ENCODE measurements at regions of chr6 and their contacts with region 1.

Region 1: DNA sequence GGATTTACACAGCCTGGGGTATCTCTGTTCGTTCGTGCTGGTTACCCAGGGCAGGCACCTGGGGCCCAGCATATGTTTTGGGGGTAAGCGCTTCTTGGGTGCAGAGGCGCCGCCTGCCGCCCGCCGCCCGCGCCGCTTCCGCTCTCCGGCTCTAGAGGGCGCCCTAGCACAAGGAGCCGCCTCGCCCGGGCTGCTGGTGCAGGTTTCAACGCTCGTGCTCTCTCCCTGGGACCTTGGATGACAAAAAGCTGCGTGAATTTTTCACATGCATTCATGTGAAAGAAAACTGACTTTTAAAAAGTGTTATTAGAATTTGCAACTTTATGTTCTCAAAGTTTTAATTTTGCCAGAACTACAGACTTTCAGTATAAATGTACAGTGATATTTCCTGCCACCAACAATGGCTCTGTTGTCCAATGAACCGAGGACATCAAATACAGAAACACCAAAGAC is 32.5 kb downstream of the PRR18 start:
- DNase-seq: peak; percentile 81
- ATAC-seq: peak; percentile 79

Region 2: GRCh38 chr6:166097915-166098522 is 177.7 kb before region 1 on chr6:
- intact Hi-C with region 1: no loop called
- DNase-seq: peak; percentile 82
- ATAC-seq: peak; percentile 96

Region 3: DNA sequence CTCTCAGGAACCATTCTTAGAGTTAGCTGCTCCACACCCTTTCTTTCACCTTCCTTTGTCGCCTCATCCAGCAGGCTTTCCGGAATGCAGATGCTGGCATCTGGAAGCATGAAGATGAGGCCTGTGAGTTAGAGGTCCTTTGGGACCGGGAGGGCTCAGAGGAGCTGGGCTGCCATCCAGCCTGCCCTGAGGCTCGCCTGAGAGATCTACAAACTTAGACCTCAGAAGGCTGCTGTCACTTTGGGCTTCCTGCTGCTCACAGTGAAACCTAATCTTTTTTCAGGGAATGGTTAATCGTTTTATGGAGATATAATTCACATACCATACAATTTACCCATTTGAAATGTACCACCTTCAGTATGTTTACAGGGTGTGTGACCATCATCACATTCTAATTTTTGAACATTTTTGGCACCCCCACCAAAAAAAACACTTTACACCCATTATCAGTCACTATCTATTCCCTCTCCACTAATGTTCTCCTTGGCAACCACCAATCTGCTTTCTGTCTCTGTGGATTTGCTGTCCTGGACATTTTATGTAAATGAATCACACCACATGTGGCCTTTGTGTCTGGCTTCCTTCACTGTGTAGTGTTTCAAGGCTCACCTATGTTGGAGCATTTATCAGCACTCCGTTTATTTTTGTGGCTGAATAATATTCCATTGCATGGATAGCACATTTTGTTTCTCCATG is 127.0 kb after region 1 on chr6:
- intact Hi-C with region 1: loop called (anchors 5 kb)
- DNase-seq: no peak
- ATAC-seq: no peak

Region 4: DNA sequence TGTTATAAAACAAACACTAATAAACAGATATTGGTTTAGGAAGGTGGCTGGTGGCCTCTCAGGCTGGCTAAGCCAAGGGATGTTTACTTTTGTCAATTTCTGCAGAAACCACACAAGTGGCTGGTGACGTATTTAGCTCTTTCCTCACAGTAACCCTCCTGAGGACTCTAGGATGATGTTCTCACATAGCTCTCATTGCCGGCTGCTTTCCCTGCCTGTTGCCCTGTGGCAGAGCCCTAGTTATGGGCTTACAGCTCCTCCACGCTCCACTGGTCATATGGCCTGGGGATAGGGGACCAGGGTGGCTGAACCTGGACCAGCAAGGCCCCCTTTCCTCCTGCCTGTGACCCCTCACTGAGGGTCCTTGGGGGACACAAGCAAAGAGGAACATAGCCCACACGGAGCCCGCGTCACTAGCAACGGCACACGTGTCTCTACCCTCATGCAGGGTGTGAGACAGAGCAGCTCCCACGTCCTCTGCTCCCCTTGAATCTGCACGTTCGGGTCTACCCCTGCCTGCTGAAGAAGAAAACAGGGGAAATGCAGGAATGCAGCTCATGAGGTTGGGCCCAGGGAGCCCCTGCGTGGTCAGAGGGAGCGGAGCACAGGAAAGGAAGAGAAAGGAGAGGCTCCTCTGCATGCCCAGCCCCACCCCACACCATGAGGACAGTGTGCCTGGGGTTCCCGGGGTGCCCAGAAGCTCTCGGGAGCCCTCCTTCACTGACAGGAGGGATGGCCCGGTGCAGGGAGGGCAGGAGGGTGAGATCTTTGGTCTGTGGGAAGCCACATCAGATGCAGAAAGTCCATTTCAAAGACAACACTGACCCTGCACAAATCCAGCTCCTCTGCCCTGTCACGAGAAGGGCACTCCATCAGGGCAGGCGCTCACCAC is 296.9 kb after region 1 on chr6:
- intact Hi-C with region 1: no loop called
- DNase-seq: no peak
- ATAC-seq: peak; percentile 95

Region 5: GRCh38 chr6:166940643-166941068 is 664.9 kb after region 1 on chr6:
- intact Hi-C with region 1: no loop called
- DNase-seq: no peak
- ATAC-seq: no peak

Measured in sciatic nerve (tissue), 2 donors.